HCT116 (cell line): ENCODE measurements at regions of chr14 and their contacts with region 1.

Region 1: GRCh38 chr14:34604995-34605394 is 25.0 kb downstream of the SNX6 start:
- DNase-seq: no peak
- ATAC-seq: no peak
- H3K4me3 ChIP-seq: no peak overlapping the region
- H3K27ac ChIP-seq: no peak overlapping the region
- H3K4me1 ChIP-seq: peaks cover 0 to 4% of the 10 kb centered on the region in 2 experiments; a peak in 1 of 4 replicates
- H3K27me3 ChIP-seq: no peaks in the 10 kb centered on the region
- CTCF ChIP-seq: no peak
- POLR2A ChIP-seq: no peak
- RAD21 ChIP-seq: no peak

Region 2: GRCh38 chr14:34569750-34570149 is 35.2 kb before region 1 on chr14:
- CTCF ChIA-PET with region 1: no interaction called
- POLR2A ChIA-PET with region 1: no interaction called
- RAD21 ChIA-PET with region 1: no interaction called
- intact Hi-C with region 1: loop called (anchors 5 kb)
- DNase-seq: no peak
- ATAC-seq: no peak
- H3K4me3 ChIP-seq: no peak overlapping the region
- H3K27ac ChIP-seq: no peak overlapping the region
- H3K4me1 ChIP-seq: no peaks in the 10 kb centered on the region
- H3K27me3 ChIP-seq: no peaks in the 10 kb centered on the region
- CTCF ChIP-seq: no peak
- POLR2A ChIP-seq: no peak
- RAD21 ChIP-seq: no peak

Region 3: DNA sequence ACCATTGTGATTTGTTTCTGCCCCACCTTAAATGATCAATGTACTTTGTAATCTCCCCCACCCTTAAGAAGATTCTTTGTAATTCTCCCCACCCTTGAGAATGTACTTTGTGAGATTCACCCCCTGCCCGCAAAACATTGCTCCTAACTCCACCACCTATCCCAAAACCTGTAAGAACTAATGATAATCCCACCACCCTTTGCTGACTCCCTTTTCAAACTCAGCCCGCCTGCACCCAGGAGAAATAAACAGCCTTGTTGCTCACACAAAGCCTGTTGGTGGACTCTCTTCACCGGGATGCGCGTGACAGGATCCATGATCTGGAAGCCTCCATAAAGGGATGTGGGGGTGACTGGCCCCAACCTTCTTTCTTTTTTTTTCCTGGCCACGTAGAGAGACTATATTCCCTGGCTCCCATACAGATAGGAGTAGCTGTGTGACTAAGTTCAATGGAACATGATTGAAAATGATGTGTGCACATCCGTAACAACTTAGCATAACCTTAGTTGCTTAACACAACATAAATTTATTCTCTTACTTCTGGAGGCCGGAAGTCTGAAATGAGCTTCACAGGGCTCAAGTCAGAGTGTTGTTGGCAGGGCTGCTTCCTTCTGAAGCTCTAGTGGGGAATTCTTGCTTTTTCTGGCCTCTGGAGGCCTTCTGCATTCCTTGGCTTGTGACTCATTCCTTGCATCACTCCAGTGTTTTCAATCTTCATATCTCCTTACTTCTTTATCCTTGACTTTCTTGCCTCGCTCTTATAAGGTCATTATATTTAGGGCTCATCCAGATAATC is 45.6 kb after region 1 on chr14:
- CTCF ChIA-PET with region 1: no interaction called
- POLR2A ChIA-PET with region 1: no interaction called
- RAD21 ChIA-PET with region 1: no interaction called
- intact Hi-C with region 1: no loop called
- DNase-seq: peak; percentile 56
- ATAC-seq: peak; percentile 82
- H3K4me3 ChIP-seq: peak overlapping the region in 1 of 2 experiments; percentile 9; a peak in 2 of 4 replicates
- H3K27ac ChIP-seq: peak overlapping the region; percentile 6; the same call in 1 of the 2 replicates
- H3K4me1 ChIP-seq: peaks cover 22 to 29% of the 10 kb centered on the region in 2 experiments
- H3K27me3 ChIP-seq: no peaks in the 10 kb centered on the region
- CTCF ChIP-seq: no peak
- POLR2A ChIP-seq: no peak
- RAD21 ChIP-seq: no peak